ENCODE measurements at regions of chr11 and their contacts with region 1.

Region 1: GRCh38 chr11:33829433-33830141 is 55.3 kb upstream of the FBXO3 start:
- DNase-seq: peak in 7 of 10 donors; percentile 35 to 93 (median 63)

Region 2: GRCh38 chr11:33362051-33362910 is 467.3 kb before region 1 on chr11:
- intact Hi-C with region 1: loop called (anchors 10 kb)
- DNase-seq: peak in 1 of 10 donors; percentile 29

Region 3: GRCh38 chr11:33808228-33808828 is 21.3 kb before region 1 on chr11:
- intact Hi-C with region 1: loop called (anchors 1 kb)
- DNase-seq: peak; percentile 72 to 98 (median 92)

Region 4: DNA sequence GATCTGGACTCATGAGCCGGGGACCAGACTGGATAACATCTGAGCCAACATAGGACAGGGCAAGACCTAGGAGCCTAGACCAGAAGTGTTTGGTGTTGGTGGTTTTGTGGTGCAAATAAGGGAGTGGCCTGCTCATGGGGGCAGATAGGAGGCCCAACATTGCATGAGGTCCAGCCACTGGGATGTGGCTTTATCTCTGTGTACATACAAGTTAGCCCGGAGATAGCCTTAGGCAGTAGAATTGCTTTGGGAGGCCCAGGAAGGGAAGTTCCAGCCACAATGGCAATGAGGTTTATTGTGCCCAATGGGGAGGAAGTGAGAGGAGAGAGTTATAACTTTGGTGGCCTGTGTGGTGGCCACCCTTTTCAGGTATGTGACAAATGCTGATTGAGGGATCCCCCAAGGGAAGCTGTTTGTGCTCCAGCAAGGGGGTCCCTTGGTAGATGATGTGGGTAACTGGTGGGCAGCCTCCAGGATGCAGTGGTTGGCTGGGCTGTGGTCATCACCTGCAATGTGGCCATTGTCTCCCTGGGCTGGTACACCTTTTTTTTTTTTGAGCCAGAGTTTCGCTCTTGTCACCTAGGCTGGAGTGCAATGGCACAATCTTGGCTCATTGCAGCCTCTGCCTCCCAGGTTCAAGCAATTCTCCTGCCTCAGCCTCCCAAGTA is 55.9 kb after region 1 on chr11:
- intact Hi-C with region 1: no loop called
- DNase-seq: no peak

Region 5: GRCh38 chr11:34174412-34175041 is 344.9 kb after region 1 on chr11:
- intact Hi-C with region 1: loop called (anchors 10 kb)
- DNase-seq: peak; percentile 70 to 98 (median 87)